Posterior vena cava (tissue), 2 donors: ENCODE measurements at regions of chr5 and their contacts with region 1.

Region 1: DNA sequence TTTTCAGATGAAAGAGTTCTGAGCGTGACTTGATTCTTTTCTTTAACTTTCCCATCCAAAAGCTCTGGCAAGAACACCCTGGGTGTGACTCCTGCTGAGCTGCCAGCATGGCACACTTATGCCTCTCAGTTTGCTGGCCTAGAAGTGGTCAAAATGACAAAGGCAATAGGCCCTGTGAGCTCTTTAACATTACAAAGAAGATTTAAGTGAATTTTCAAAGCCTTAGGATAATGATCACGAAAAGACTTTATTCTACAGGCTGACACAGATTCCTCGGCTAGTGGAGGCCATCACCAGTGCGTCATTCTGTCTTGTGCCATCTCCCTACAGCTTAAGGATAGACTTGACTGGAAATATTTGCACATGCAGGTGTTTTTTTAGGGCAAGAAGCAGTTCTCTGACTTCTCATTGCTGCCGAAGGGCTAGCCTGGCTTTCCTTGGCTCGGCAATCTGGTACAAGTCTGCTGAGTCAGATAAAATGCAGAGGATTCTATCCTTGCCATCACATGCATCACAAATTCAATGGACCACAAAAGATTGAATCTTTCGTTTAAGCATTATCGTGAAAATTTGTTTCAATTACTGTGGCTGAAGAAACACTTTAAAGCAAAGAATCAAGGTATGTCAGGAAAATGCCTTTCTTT is 311.5 kb downstream of the COX7C start:
- DNase-seq: no peak

Region 2: GRCh38 chr5:86460519-86460918 is 468.7 kb before region 1 on chr5:
- intact Hi-C with region 1: no loop called
- DNase-seq: no peak

Region 3: DNA sequence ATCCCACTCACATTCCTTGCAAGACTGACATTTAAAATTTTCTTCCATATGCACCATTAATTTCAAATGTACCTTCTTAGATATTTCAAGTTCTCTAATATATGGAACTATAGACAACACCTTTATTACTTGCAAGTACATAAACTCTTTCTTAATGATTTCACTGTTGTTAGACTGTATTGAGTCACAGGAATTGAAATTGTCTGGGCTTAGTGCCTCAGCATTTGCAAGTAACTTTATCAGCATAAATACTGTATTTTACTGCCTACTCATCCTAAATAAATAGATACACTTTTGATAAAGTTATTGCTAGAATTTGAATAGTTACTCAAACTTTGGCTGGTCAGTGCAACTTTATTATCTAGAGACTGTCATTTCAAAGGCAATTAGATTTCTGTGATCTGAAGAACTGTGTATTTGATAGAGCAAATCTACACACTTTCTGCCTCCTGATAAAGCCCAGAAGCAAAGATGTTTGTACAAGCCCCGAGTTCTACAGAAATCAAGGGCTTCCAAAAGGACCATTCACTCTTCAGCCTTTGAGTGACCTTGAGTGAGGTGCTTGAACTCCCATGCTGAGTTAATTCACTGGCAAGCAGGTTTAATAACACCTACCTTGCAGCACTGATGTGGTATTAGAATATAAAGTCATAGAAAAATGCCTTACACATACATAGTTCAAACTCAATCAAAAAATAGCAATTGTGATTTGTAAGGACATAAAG is 219.9 kb before region 1 on chr5:
- intact Hi-C with region 1: loop called in 1 of 2 experiments (anchors 5 kb)
- DNase-seq: no peak